Caco-2 (cell line): ENCODE measurements at regions of chr6 and their contacts with region 1.

Region 1: DNA sequence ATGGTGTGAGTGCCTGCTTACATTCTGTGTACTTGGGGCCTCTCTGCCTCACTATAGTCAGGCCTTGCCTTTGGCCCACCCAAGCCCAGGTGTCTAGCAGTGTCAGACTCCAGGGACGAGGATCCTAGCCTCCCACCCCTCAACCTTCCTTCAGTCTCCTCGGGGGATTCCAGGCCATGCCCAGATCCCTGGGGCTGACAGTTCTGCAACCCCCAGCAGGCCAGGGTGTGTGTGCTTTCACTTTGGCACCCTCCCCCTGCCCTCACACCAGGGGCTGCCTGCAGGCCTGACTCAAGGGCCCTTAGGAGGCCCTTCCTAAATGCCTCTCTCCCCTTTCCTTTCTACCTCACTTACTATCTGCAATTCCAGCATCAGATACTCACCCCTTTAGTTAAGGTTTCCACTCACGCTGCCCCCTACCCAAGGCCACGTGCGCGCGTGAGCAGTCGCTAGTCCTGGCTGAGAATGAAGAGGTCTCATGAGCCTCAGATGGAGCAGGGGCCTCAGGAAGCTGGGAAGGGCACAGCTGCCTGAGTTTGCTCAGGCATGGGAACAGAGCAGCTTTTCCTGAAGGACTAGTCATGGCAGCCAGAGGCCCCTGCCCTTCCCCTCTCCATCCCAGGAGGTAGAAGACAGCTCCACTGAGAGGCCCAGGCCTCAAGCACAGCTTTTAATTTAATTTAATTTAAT is 859 bp upstream of the CLPS start:
- DNase-seq: no peak
- H3K4me3 ChIP-seq: no peak overlapping the region
- H3K4me3 Mint-ChIP-seq: no peak overlapping the region
- H3K27ac Mint-ChIP-seq: no peak overlapping the region
- H3K4me1 ChIP-seq: peaks cover 10% of the 10 kb centered on the region; the same call in 1 of the 2 replicates
- H3K4me1 Mint-ChIP-seq: no peaks in the 10 kb centered on the region
- H3K27me3 ChIP-seq: no peaks in the 10 kb centered on the region
- H3K27me3 Mint-ChIP-seq: peaks cover under 1% of the 10 kb centered on the region
- CTCF ChIP-seq: no peak

Region 2: DNA sequence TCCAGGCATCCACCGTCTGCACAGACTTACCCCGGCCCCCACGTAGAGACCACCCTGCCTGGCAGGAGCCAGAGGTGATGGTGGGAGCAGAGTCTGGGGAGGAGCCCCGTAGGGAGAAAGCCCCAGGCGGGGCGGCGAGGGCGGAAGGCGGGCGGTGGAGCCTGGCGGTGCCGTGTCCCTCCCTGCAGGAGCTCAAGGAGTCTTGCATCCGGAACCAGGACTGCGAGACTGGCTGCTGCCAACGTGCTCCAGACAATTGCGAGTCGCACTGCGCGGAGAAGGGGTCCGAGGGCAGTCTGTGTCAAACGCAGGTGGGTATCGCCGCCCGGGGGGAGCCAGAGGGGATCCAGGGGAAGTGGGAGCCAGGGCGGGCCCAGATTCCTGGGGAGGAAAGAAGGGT is 11.2 kb before region 1 on chr6:
- CTCF ChIA-PET with region 1: no interaction called
- POLR2A ChIA-PET with region 1: no interaction called
- intact Hi-C with region 1: loop called (anchors 1 kb)
- DNase-seq: no peak
- H3K4me3 ChIP-seq: no peak overlapping the region
- H3K4me3 Mint-ChIP-seq: no peak overlapping the region
- H3K27ac Mint-ChIP-seq: no peak overlapping the region
- H3K4me1 ChIP-seq: peaks cover 18% of the 10 kb centered on the region
- H3K4me1 Mint-ChIP-seq: peaks cover 17% of the 10 kb centered on the region
- H3K27me3 ChIP-seq: no peaks in the 10 kb centered on the region
- H3K27me3 Mint-ChIP-seq: peaks cover 7% of the 10 kb centered on the region
- CTCF ChIP-seq: no peak